ENCODE measurements at regions of chr2 and their contacts with region 1.

Region 1: DNA sequence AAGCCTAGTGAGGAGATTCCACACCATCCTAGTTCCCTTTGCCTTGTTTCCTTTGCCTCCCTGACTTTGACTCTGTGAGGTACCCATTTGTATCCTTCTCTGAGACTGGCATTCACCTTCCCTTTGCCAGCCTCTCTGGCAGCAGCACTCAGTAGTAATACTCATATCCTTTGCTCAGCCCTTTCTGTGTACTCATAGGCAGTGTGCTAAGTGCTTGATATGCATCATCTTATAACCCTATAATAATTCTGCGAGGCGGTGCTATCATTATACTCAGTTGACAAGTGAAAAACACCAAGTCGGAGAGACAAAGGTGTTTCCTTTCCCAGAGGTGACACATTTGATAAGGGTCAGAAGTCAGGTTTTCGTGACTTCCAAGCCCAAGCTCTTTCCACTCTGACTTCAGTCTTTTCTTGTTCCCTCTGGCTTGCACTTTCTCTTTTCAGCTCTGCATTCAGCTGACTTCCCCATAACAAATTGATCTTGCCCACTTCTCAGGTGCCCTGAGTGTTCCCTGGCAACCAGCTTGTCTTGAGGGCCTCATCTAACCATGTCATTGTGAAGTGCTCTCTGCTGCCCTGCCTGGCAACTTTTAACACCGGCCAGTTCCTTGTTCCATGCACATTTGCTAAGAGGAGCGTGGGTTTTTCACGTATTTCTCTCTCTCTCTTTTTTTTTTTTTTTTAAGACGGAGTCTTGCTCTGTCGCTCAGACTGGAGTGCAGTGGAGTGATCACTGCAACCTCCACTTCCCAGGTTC is 94.5 kb upstream of the UPP2 start:
- DNase-seq: no peak
- H3K4me3 ChIP-seq: no peak overlapping the region
- H3K27ac ChIP-seq: no peak overlapping the region
- H3K4me1 ChIP-seq: no peaks in the 10 kb centered on the region
- H3K27me3 ChIP-seq: no peaks in the 10 kb centered on the region
- CTCF ChIP-seq: no peak
- POLR2A ChIP-seq: no peak

Region 2: GRCh38 chr2:157777427-157777826 is 229.7 kb before region 1 on chr2:
- intact Hi-C with region 1: loop called (anchors 10 kb)
- DNase-seq: peak; percentile 69
- H3K4me3 ChIP-seq: no peak overlapping the region
- H3K27ac ChIP-seq: no peak overlapping the region
- H3K4me1 ChIP-seq: no peaks in the 10 kb centered on the region
- H3K27me3 ChIP-seq: no peaks in the 10 kb centered on the region
- CTCF ChIP-seq: peak in 2 of 3 experiments; percentile 51 to 68
- POLR2A ChIP-seq: no peak

Region 3: GRCh38 chr2:157920736-157921135 is 86.4 kb before region 1 on chr2:
- intact Hi-C with region 1: no loop called
- DNase-seq: no peak
- H3K4me3 ChIP-seq: no peak overlapping the region
- H3K27ac ChIP-seq: no peak overlapping the region
- H3K4me1 ChIP-seq: no peaks in the 10 kb centered on the region
- H3K27me3 ChIP-seq: no peaks in the 10 kb centered on the region
- CTCF ChIP-seq: no peak
- POLR2A ChIP-seq: no peak

Region 4: GRCh38 chr2:158113741-158114295 is 106.7 kb after region 1 on chr2:
- intact Hi-C with region 1: no loop called
- DNase-seq: no peak
- H3K4me3 ChIP-seq: no peak overlapping the region
- H3K27ac ChIP-seq: no peak overlapping the region
- H3K4me1 ChIP-seq: no peaks in the 10 kb centered on the region
- H3K27me3 ChIP-seq: no peaks in the 10 kb centered on the region
- CTCF ChIP-seq: no peak
- POLR2A ChIP-seq: no peak

Region 5: DNA sequence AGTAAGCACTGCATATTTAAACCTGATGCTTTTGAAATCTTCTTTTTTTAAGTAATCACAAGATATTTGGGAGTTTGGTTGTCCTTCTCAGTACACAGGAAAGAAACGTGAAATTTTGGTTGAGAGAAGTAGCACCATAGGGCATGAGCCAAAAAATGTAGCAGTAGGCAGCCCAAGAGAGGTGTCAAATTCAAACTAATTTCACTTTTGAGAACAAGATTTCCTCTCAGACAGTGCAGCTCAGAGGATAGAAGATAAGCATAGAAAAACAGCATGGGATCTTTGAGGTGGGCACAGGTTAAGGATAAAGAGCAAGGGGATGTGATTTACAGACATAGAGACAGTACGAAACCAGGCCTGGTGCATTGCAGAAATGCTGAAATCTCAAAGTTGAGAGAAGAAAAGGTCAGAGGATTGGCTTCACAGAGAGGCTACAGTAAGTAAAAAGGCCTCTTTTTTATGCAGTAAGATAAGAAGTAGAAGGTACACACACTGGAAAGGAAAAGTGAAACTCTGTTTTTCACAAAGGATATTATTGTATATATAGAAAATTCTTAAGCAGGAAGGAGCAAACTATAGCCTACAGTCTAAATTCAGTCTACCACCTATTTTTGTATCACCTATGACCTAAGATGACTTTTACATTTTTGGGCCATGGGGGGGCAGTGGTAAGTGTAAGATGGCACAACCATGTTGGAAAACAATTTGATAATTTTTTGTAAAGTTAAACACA is 539.4 kb after region 1 on chr2:
- intact Hi-C with region 1: no loop called
- DNase-seq: no peak
- H3K4me3 ChIP-seq: no peak overlapping the region
- H3K27ac ChIP-seq: no peak overlapping the region
- H3K4me1 ChIP-seq: no peaks in the 10 kb centered on the region
- H3K27me3 ChIP-seq: no peaks in the 10 kb centered on the region
- CTCF ChIP-seq: no peak
- POLR2A ChIP-seq: no peak

Region 6: GRCh38 chr2:159243529-159243928 is 1236.4 kb after region 1 on chr2:
- intact Hi-C with region 1: no loop called
- DNase-seq: no peak
- H3K4me3 ChIP-seq: no peak overlapping the region
- H3K27ac ChIP-seq: no peak overlapping the region
- H3K4me1 ChIP-seq: no peaks in the 10 kb centered on the region
- H3K27me3 ChIP-seq: no peaks in the 10 kb centered on the region
- CTCF ChIP-seq: no peak
- POLR2A ChIP-seq: no peak

Measured in testis (tissue), 5 donors.